ENCODE measurements at regions of chr1 and their contacts with region 1.

Region 1: GRCh38 chr1:145978854-145979759 is 14.6 kb downstream of the POLR3GL start:
- DNase-seq: peak; percentile 94
- ATAC-seq: peak; percentile 95

Region 2: DNA sequence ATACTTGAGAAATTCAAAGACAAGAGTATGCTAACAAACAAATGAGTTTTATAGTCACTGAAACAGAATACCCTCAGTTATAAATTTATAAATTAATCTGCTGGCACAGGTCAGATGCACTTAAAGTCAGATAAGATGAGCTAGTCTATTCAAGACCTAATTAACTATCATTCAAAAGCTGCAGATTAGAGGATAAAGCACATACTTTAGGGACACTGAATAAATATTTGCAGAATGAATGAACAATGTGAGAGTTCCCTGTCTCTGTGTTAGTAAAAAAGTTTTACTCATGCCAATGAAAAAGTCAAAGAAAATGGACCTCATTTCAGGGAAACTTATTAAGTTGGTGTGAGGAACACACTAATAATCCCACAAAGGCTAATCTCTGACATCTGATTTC is 213.5 kb before region 1 on chr1:
- intact Hi-C with region 1: no loop called
- DNase-seq: no peak
- ATAC-seq: no peak

Region 3: DNA sequence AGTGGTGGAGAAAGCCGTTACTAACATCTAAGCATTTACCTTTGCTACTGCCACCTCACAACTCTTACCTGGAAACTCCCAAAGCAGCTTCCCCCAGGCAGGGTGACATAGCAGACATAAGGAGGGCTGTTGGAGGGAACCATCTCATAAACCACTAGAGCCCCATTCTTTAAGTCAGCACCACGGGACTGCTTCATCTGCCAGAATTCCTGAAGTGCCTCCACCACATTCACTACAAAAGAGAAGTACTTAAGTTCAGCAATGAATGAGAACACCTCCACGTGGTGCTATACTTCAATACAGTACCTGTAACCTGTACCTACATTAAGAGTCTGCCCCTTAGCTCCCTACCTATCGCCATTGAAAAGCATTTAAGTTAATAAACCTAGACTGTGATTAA is 31.6 kb before region 1 on chr1:
- intact Hi-C with region 1: no loop called
- DNase-seq: no peak
- ATAC-seq: no peak

Region 4: GRCh38 chr1:145996433-145997015 is 17.4 kb after region 1 on chr1 and contains the start of gene TXNIP:
- intact Hi-C with region 1: loop called in 1 of 2 experiments (anchors 2 kb)
- DNase-seq: peak; percentile 99
- ATAC-seq: peak; percentile 93 to 94
- total RNA-seq, gene TXNIP: 602 to 909 TPM

Region 5: GRCh38 chr1:146007506-146008133 is 28.5 kb after region 1 on chr1:
- intact Hi-C with region 1: loop called (anchors 2 to 5 kb)
- DNase-seq: no peak
- ATAC-seq: no peak

Region 6: DNA sequence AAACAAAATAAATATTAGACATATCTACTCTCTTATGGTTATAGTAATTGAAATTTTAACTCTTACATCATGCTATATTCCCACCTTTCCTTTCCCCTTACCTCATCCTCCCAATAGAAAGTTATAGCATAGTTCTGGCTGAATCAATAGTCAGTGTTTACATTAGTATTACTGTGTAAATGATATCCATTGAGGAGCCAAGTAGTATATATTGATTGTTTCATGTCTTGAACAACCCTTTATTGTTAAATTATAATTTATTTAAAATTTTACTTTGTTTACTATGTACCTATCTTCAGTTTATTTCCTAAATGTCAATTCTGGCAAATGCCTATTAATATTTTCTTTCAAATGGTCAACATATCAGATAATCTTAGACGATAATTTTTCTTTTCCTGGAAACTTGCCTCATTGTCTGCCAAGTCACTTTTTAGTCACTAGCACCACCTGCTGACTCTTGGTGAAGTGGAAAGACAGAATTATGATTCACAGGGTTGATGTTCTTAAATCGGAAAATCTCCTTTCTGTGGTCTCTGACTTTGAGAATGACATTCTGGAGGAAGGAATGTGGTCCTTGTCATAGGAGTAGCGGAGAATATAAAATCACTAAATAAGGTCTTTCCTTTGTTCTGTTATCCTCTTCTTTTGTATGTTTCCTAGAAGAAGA is 33.8 kb after region 1 on chr1:
- intact Hi-C with region 1: loop called in 1 of 2 experiments (anchors 5 kb)
- DNase-seq: no peak
- ATAC-seq: peak; percentile 48 to 50

Measured in left cardiac atrium (tissue), 4 donors.